Aorta (tissue), 5 donors: ENCODE measurements at regions of chr4 and their contacts with region 1.

Region 1: DNA sequence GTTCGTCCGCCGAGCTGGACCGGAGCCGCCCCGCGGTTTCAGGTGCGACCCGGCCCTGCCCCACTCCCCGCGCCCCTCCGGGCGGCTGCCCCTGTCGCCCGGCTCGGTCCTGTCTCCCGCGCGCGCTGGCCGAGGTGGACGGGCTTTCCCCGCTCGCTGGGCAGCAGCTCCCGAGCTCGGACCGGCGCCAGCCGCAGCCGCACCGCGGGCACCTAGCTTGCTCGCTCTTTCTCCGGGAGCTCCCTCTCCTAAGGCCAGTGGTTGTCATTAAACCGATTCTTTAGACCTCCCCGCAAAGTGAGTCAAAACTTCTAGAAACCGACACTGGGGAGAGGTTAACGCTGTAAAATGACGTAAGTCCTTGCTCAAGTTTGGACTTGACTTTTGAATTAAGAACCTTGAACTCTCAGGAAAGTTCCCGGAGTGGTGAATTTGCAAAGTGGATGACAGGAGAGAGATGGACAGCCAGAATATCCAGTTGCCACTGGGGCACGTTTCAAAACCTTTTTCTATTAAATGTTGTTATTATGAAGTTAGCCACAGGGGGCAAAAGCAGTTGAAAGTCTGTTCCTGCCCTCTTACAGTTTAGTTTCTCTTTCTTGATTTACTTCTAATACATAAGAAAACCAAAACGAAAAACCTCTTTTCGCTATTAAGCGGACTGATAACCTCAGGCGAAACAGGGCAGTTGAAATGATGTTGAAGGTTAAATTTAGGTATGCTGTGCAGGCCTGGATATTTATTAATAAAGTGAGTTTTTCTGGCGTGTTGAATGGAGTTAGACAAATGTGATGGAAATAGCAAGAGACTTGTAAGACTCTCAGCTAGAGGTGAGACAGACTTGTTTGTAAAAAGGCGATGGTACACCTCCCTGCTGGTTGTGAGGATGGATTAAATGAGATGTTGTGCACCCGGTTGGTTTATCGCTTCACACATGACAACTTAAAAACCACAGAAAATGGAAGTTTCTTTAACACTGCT is 847 bp downstream of the PI4K2B start:
- DNase-seq: peak; percentile 68 to 84
- ATAC-seq: peak; percentile 85
- H3K4me3 ChIP-seq: peak overlapping the region; percentile 69 to 93
- H3K27ac ChIP-seq: peak overlapping the region; percentile 73 to 80
- H3K4me1 ChIP-seq: peaks cover 0 to 3% of the 10 kb centered on the region in 2 donors
- H3K27me3 ChIP-seq: no peaks in the 10 kb centered on the region

Region 2: GRCh38 chr4:24988776-24989175 is 245.9 kb before region 1 on chr4:
- intact Hi-C with region 1: no loop called
- DNase-seq: no peak
- ATAC-seq: no peak
- H3K4me3 ChIP-seq: no peak overlapping the region
- H3K27ac ChIP-seq: no peak overlapping the region
- H3K4me1 ChIP-seq: no peaks in the 10 kb centered on the region
- H3K27me3 ChIP-seq: no peaks in the 10 kb centered on the region

Region 3: GRCh38 chr4:25172961-25173915 is 61.4 kb before region 1 on chr4:
- intact Hi-C with region 1: loop called (anchors 2 to 5 kb)
- DNase-seq: peak in 1 of 2 donors; percentile 62
- ATAC-seq: peak; percentile 90
- H3K4me3 ChIP-seq: no peak overlapping the region
- H3K27ac ChIP-seq: peak overlapping the region; percentile 33 to 53
- H3K4me1 ChIP-seq: peaks cover 0 to 2% of the 10 kb centered on the region in 2 donors
- H3K27me3 ChIP-seq: no peaks in the 10 kb centered on the region

Region 4: DNA sequence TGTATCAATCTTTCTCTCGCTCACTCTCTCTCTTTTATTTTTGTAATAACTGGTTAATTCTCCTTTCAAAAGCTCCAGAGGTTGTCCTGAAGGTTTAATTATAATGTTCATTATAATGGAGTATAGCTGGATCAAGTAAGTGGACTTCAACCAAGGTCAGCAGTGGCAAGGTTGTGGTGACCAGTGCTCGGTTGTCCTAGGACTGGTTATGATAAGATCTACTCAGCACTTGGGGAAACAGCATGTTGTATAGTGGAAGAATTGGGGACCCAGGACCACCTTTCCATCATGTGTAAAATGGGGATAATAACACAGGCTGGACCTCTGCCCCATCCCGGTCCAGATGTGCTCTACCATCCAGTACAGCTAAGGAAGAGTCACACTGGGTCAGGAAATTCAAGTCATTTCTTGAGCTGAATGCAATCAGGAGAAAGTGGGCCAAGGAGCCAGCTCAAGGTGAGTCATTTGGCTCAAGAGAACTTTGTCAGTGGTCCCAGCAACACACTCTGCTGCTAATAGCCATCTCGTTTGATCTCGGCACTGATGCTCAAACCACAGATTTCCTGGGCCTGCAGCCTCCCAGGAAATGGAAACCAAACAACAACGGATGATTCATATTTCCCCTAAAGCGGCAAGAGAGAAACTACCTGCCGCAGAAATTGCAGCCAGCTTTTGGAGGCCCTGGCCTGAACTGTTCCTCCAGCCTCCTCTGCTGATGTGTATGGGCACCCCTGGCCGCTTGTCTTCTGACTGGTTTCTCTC is 962.5 kb after region 1 on chr4:
- intact Hi-C with region 1: no loop called
- DNase-seq: no peak
- ATAC-seq: no peak
- H3K4me3 ChIP-seq: no peak overlapping the region
- H3K27ac ChIP-seq: no peak overlapping the region
- H3K4me1 ChIP-seq: no peaks in the 10 kb centered on the region
- H3K27me3 ChIP-seq: no peaks in the 10 kb centered on the region